ENCODE measurements at regions of chr6 and their contacts with region 1.

Region 1: GRCh38 chr6:26342106-26343004 is 22.6 kb upstream of the BTN3A2 start:
- DNase-seq: no peak
- H3K4me3 Mint-ChIP-seq: peak overlapping the region; percentile 3
- H3K27ac Mint-ChIP-seq: no peak overlapping the region
- H3K4me1 Mint-ChIP-seq: no peaks in the 10 kb centered on the region
- H3K27me3 Mint-ChIP-seq: no peaks in the 10 kb centered on the region
- CTCF ChIP-seq: no peak

Region 2: GRCh38 chr6:26285143-26286134 is 56.9 kb before region 1 on chr6:
- CTCF ChIA-PET with region 1: no interaction called
- intact Hi-C with region 1: no loop called
- DNase-seq: peak; percentile 99
- H3K4me3 Mint-ChIP-seq: peak overlapping the region; percentile 76
- H3K27ac Mint-ChIP-seq: peak overlapping the region; percentile 98
- H3K4me1 Mint-ChIP-seq: peaks cover 35% of the 10 kb centered on the region
- H3K27me3 Mint-ChIP-seq: no peaks in the 10 kb centered on the region
- CTCF ChIP-seq: no peak

Region 3: GRCh38 chr6:26331218-26332073 is 10.9 kb before region 1 on chr6:
- CTCF ChIA-PET with region 1: interaction called, 12 read pairs
- intact Hi-C with region 1: no loop called
- DNase-seq: peak; percentile 65
- H3K4me3 Mint-ChIP-seq: peak overlapping the region; percentile 67
- H3K27ac Mint-ChIP-seq: peak overlapping the region; percentile 67
- H3K4me1 Mint-ChIP-seq: peaks cover 43% of the 10 kb centered on the region
- H3K27me3 Mint-ChIP-seq: peaks cover 11% of the 10 kb centered on the region
- CTCF ChIP-seq: no peak

Region 4: DNA sequence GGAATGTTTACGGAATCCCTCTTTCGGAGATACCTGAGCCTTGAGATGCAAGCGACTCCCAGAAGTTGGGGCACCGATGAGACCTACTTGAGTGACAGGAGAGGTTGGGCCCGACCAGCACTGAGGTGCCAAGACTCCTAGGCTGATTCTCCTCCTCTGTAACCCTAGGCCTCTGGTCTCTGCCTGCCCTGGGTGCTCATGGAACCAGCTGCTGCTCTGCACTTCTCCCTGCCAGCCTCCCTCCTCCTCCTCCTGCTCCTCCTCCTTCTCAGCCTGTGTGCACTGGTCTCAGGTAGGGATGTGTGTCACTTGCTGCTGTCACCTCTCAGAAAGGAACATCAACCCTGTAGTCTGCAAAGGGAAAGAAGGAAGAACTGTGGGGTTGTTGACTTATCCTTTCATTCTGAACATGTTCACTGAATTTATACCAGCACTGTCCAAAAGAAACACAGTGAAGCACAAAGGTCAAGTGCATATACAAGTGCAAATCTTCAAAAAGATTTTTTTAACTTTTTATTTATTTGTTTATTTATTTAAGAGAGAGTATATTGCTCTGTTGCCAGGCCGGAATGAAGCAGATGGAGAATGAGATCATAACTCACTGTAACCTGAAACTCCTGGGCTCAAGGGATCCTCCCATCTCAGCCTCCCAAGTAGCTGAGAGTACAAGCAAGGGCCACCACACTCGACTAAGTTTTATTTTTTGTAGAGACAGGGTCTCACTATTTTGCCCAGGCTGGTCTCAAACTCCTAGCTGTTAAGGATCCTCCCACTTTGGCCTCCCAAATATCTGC is 41.5 kb after region 1 on chr6:
- CTCF ChIA-PET with region 1: no interaction called
- intact Hi-C with region 1: no loop called
- DNase-seq: peak; percentile 30
- H3K4me3 Mint-ChIP-seq: peak overlapping the region; percentile 95
- H3K27ac Mint-ChIP-seq: peak overlapping the region; percentile 88
- H3K4me1 Mint-ChIP-seq: peaks cover 35% of the 10 kb centered on the region
- H3K27me3 Mint-ChIP-seq: no peaks in the 10 kb centered on the region
- CTCF ChIP-seq: no peak

Region 5: GRCh38 chr6:26421259-26422144 is 79.1 kb after region 1 on chr6:
- CTCF ChIA-PET with region 1: interaction called, 6 read pairs
- intact Hi-C with region 1: loop called (anchors 1 kb)
- DNase-seq: peak; percentile 72
- H3K4me3 Mint-ChIP-seq: no peak overlapping the region
- H3K27ac Mint-ChIP-seq: no peak overlapping the region
- H3K4me1 Mint-ChIP-seq: peaks cover 8% of the 10 kb centered on the region
- H3K27me3 Mint-ChIP-seq: no peaks in the 10 kb centered on the region
- CTCF ChIP-seq: no peak

Region 6: DNA sequence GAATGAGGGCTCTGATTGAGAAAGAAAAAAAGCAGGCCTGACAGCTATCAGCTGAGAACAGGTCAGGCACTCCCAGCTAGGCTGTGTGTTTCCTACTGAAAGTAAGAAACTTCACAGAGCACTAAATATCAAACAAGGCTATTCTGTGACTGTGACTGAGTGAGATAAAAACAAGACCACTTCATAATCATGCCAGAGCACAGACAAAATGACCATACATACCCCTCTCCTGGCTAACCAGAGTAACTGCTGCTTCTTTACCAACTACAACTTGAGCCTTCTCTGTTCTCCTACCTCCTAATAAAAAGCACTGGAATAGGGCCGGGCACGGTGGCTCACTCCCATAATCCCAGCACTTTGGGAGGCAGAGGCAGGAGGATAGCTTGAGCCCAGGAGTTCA is 150.9 kb after region 1 on chr6:
- CTCF ChIA-PET with region 1: no interaction called
- intact Hi-C with region 1: loop called (anchors 5 kb)
- DNase-seq: no peak
- H3K4me3 Mint-ChIP-seq: no peak overlapping the region
- H3K27ac Mint-ChIP-seq: no peak overlapping the region
- H3K4me1 Mint-ChIP-seq: no peaks in the 10 kb centered on the region
- H3K27me3 Mint-ChIP-seq: peaks cover 30% of the 10 kb centered on the region
- CTCF ChIP-seq: no peak

Region 7: GRCh38 chr6:26553635-26554446 is 211.5 kb after region 1 on chr6:
- CTCF ChIA-PET with region 1: interaction called, 8 read pairs
- intact Hi-C with region 1: loop called (anchors 5 kb)
- DNase-seq: peak; percentile 89
- H3K4me3 Mint-ChIP-seq: no peak overlapping the region
- H3K27ac Mint-ChIP-seq: no peak overlapping the region
- H3K4me1 Mint-ChIP-seq: peaks cover 33% of the 10 kb centered on the region
- H3K27me3 Mint-ChIP-seq: no peaks in the 10 kb centered on the region
- CTCF ChIP-seq: no peak